ENCODE measurements at regions of chr7 and their contacts with region 1.

Region 1: DNA sequence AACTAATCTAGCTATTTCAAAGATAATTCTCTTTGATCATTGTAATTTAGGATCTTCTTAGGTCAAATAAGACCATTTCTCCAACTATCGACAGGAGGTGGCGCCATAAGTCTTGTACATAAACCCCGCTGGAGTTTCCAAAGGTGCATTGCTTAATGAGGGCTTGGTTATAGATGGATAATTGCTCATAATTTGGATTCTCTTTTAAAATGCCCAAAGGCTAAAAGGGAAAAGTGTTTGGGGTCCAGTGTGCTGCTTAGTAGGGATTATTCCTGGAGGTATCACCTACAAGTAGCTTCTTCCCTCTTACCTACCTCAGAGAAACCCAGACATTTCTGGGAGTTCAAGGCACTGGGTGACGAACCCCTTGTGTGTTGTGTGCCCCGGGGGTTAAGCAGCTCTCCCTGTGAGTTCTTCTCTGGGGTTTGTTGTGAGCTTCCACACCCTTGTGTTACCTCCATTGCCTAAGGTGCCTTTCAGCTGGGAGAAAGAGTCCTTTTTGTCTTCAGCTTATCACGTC is 75.2 kb downstream of the PAXIP1 start:
- DNase-seq: peak; percentile 88
- ATAC-seq: peak; percentile 54
- H3K4me3 ChIP-seq: peak overlapping the region; percentile 64 to 98 (median 83)
- H3K4me3 Mint-ChIP-seq: peak overlapping the region; percentile 97
- H3K27ac ChIP-seq: peak overlapping the region; percentile 83 to 94
- H3K27ac Mint-ChIP-seq: peak overlapping the region; percentile 96
- H3K4me1 ChIP-seq: peaks cover 12 to 14% of the 10 kb centered on the region in 2 donors
- H3K4me1 Mint-ChIP-seq: peaks cover 31% of the 10 kb centered on the region
- H3K27me3 ChIP-seq: no peaks in the 10 kb centered on the region
- H3K27me3 Mint-ChIP-seq: no peaks in the 10 kb centered on the region
- CTCF ChIP-seq: peak; percentile 83

Region 2: DNA sequence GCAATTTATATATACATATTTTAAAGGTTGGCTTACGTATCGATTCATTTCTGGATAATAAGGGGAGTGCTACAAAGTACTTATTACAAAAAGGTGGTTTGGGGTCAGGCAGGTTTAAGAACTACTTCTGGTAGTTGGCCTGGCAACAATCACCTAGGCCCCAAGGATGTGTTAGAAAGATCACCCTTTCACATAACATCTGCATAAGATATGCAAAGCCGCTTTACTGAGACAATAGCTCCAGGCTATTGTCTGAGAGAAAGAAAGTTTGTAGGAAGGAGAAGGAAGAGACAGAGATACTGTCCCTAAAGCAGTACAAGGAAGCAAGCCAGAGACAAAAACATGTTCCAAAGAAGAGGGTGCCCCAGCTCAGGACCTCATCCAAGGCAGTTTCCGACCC is 69.1 kb after region 1 on chr7:
- CTCF ChIA-PET with region 1: interaction called, 11 read pairs
- POLR2A ChIA-PET with region 1: no interaction called
- intact Hi-C with region 1: no loop called
- DNase-seq: no peak
- ATAC-seq: no peak
- H3K4me3 ChIP-seq: no peak overlapping the region
- H3K4me3 Mint-ChIP-seq: no peak overlapping the region
- H3K27ac ChIP-seq: no peak overlapping the region
- H3K27ac Mint-ChIP-seq: no peak overlapping the region
- H3K4me1 ChIP-seq: peaks cover 1 to 2% of the 10 kb centered on the region in 2 donors
- H3K4me1 Mint-ChIP-seq: peaks cover 2% of the 10 kb centered on the region
- H3K27me3 ChIP-seq: no peaks in the 10 kb centered on the region
- H3K27me3 Mint-ChIP-seq: no peaks in the 10 kb centered on the region
- CTCF ChIP-seq: no peak

Region 3: DNA sequence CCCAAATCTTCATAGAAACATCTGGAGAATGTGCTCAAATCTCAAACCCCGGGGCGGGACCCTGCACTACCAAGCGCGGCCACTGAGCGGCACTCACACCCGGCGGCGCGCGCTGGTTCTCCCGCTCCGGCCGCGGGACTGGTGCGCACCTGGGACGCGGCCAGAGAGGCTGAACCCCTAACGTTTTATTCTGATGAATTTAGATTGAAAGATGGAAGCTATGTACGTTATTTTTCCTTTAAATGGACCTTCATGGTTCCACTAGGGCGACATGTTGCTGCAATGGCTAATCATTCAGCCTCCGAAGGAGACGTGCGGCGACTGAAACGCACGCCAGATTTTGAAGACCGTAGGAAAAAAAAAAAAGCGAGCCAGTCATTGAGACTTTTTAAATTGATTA is 263.0 kb after region 1 on chr7:
- CTCF ChIA-PET with region 1: interaction called, 5 read pairs
- POLR2A ChIA-PET with region 1: no interaction called
- intact Hi-C with region 1: loop called (anchors 2 kb)
- DNase-seq: peak; percentile 68
- ATAC-seq: peak; percentile 85
- H3K4me3 ChIP-seq: no peak overlapping the region
- H3K4me3 Mint-ChIP-seq: no peak overlapping the region
- H3K27ac ChIP-seq: no peak overlapping the region
- H3K27ac Mint-ChIP-seq: no peak overlapping the region
- H3K4me1 ChIP-seq: peaks cover 4 to 5% of the 10 kb centered on the region in 2 donors
- H3K4me1 Mint-ChIP-seq: peaks cover 2% of the 10 kb centered on the region
- H3K27me3 ChIP-seq: peaks cover 0 to 4% (median 2%) of the 10 kb centered on the region in 4 experiments
- H3K27me3 Mint-ChIP-seq: peaks cover 10% of the 10 kb centered on the region
- CTCF ChIP-seq: peak; percentile 86

Region 4: DNA sequence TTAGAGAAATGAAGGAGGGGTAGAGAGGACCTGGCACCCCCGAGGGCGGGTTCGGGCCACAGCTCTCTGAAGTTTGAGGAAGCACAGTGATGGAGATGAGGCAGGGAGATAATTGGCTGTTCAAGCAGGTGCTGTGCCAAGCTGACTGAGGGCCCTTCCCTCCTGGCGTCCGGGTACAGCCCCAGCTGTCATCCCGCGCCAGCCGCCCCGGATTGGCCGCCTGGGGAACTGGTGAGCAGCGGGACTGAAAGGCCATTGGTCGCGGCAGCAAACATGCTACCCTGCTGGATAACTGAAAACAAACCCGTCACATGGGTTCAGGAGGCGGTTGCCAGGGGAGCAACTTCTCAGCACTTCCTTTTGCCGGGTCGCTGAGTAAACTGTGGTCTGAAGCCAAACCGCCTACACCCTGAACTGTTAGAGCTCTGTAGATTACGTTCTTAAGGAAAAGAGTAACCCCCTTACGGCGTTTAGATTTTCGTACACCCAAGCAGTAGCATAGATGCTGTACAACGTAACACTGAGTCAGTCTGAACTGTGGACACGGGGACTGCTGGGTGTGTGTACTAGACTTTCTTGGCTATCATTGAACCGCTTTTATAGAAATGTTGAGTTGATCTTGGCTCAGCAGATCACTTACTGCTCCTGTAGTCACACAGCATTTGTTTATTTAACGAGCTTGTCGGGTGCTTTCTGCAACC is 371.3 kb after region 1 on chr7:
- CTCF ChIA-PET with region 1: interaction called, 21 read pairs
- POLR2A ChIA-PET with region 1: interaction called, 11 read pairs
- intact Hi-C with region 1: loop called (anchors 1 kb)
- DNase-seq: peak; percentile 98
- ATAC-seq: peak; percentile 72
- H3K4me3 ChIP-seq: peak overlapping the region; percentile 58 to 91 (median 79)
- H3K4me3 Mint-ChIP-seq: peak overlapping the region; percentile 94
- H3K27ac ChIP-seq: peak overlapping the region; percentile 88 to 98
- H3K27ac Mint-ChIP-seq: peak overlapping the region; percentile 97
- H3K4me1 ChIP-seq: peaks cover 26 to 34% of the 10 kb centered on the region in 2 donors
- H3K4me1 Mint-ChIP-seq: peaks cover 38% of the 10 kb centered on the region
- H3K27me3 ChIP-seq: no peaks in the 10 kb centered on the region
- H3K27me3 Mint-ChIP-seq: no peaks in the 10 kb centered on the region
- CTCF ChIP-seq: no peak

Region 5: DNA sequence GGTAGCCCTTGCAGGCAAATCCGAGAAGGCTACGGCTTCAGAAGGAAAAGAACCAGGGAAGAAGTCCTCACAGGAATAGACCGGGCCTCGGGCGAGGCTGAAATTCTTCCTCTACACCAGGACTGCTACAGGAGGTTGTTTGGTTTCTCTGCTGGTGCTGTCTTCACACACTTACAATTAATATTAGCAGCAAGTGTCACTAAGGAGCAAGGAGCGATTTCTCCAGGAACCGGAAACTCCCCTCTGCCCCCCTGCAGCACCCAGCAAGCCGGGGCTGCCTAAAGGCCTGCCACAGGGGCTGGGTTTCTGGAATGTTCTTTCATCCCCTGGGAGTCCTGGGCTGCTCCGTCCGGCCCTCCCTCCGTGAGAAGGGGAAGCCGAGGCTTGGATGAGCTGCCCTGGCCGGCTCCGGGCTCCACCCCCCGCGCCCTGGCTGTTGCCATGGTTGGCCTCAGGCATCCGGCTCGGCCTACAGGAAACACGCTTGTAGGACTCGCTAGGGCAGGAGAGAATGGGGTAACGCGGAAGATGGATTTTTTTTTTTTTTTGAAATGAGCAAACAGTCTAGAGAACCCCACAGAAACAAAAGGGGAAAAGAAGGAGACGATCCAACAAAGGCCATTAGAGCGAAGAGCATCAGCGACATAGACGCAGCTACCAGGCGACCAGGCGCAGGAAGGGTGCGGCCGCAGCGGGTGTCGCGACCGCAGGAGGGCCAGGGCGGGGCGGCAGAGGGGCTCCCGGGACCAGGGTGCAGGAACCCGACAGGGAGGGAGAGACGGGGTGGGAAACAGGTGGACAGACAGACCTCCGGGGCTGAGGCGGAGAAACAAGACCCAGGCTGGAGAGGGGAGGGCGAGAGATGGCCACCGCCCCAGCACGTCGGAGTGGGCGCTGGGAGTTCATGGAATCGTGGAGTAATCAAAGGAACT is 563.3 kb after region 1 on chr7:
- CTCF ChIA-PET with region 1: no interaction called
- POLR2A ChIA-PET with region 1: no interaction called
- intact Hi-C with region 1: loop called (anchors 1 kb)
- DNase-seq: peak; percentile 67
- ATAC-seq: peak; percentile 92
- H3K4me3 ChIP-seq: peak overlapping the region; percentile 50 to 76 (median 57)
- H3K4me3 Mint-ChIP-seq: peak overlapping the region; percentile 94
- H3K27ac ChIP-seq: peak overlapping the region; percentile 25 to 76
- H3K27ac Mint-ChIP-seq: peak overlapping the region; percentile 89
- H3K4me1 ChIP-seq: peaks cover 26 to 32% of the 10 kb centered on the region in 2 donors
- H3K4me1 Mint-ChIP-seq: peaks cover 26% of the 10 kb centered on the region
- H3K27me3 ChIP-seq: peaks cover 0 to 11% (median 0%) of the 10 kb centered on the region in 4 experiments
- H3K27me3 Mint-ChIP-seq: peaks cover 13% of the 10 kb centered on the region
- CTCF ChIP-seq: no peak

Region 6: GRCh38 chr7:155738652-155739537 is 811.2 kb after region 1 on chr7:
- CTCF ChIA-PET with region 1: interaction called, 3 read pairs
- POLR2A ChIA-PET with region 1: no interaction called
- intact Hi-C with region 1: loop called (anchors 1 kb)
- DNase-seq: peak; percentile 81
- ATAC-seq: peak; percentile 36
- H3K4me3 ChIP-seq: no peak overlapping the region
- H3K4me3 Mint-ChIP-seq: no peak overlapping the region
- H3K27ac ChIP-seq: no peak overlapping the region
- H3K27ac Mint-ChIP-seq: peak overlapping the region; percentile 7
- H3K4me1 ChIP-seq: peaks cover 3 to 7% of the 10 kb centered on the region in 2 donors
- H3K4me1 Mint-ChIP-seq: peaks cover 44% of the 10 kb centered on the region
- H3K27me3 ChIP-seq: no peaks in the 10 kb centered on the region
- H3K27me3 Mint-ChIP-seq: no peaks in the 10 kb centered on the region
- CTCF ChIP-seq: peak; percentile 81

Measured in B cell (primary cell).